ENCODE measurements at regions of chr5 and their contacts with region 1.

Region 1: DNA sequence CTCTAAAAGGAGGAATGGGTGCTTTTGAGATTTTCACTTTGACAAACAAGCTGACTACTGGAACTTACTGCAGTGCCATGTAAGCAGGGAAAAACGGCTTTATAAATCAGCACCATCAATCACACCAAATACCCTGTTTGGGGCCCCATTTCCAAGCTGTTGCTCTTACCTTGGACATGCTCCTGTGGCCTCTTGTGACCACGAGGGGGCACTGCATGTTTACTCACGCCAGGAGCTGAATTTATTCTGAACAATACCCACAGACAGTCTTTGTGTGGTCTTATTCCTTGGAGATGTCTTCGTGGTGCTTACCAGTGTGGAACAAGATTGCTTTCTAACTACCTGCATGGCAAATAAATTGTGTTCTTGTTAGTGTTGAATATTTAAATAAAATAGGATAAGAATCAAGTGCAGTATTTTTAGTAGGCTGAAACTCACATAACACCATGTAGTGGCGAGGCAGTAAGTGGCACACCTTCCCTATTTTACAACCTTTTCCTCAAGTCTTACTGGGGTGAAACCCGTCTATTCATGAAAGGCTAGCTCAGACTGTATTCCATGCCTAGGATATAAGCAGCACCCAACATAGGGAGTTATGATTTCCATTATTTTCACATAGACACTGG is 155.5 kb upstream of the NMUR2 start:
- DNase-seq: peak; percentile 36
- H3K4me3 ChIP-seq: no peak overlapping the region
- H3K27ac ChIP-seq: no peak overlapping the region
- H3K4me1 ChIP-seq: no peaks in the 10 kb centered on the region
- H3K27me3 ChIP-seq: no peaks in the 10 kb centered on the region
- CTCF ChIP-seq: peak; percentile 79
- EP300 ChIP-seq: no peak
- RAD21 ChIP-seq: peak; percentile 72

Region 2: DNA sequence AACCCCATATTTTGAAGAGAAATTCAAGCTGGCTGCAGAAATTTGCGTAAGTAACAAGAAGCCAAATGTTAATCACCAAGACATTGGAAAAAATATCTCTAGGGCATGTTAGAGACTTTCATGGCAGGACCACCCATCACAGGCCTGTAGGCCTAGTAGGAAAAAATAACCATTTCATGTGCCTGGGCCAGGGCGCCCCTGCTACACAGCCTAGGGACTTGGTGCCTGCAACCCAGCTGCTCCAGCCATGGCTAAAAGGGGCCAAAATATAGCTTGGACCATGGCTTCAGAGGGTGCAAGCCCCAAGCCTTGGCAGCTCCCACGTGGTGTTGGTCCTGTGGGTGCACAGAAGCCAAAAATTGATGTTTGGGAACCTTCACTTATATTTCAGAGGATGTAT is 12.2 kb after region 1 on chr5:
- CTCF ChIA-PET with region 1: interaction called, 17 read pairs
- POLR2A ChIA-PET with region 1: no interaction called
- DNase-seq: no peak
- H3K4me3 ChIP-seq: no peak overlapping the region
- H3K27ac ChIP-seq: no peak overlapping the region
- H3K4me1 ChIP-seq: no peaks in the 10 kb centered on the region
- H3K27me3 ChIP-seq: no peaks in the 10 kb centered on the region
- CTCF ChIP-seq: no peak
- EP300 ChIP-seq: no peak
- RAD21 ChIP-seq: no peak

Region 3: DNA sequence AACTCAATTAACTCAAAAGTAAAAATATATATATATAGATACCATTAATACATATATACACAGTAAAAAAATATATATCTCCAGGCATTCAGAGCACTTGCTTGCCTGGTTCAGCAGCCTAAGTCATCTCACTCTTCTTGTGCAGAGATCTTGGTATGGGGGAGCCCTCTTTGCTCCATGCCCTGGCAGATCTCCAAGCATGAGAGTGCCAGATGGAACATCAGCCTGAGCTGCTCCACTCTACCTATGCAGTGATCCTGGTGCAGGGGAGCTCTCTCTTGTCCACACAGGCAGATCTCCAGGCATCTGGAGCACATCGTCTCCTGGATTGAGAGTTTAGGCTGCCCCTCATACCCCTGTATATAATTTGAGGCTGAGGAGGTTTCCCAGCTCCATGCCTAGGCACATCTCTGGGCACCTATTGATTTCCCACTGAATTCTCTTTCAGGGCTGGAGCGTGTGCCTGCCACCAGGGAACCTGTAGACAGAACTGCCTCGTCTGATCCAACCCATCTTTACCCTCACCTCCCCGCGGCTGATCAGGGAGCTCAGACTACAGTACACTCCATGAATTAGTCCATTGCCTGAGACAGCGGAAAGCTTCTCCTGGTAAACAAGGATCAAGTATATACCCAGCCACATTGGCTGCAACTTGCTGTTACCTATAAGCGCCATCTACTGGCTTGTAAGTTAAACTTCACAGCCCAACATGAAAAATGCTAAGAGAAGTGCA is 587.4 kb after region 1 on chr5:
- CTCF ChIA-PET with region 1: interaction called, 13 read pairs
- POLR2A ChIA-PET with region 1: no interaction called
- DNase-seq: peak; percentile 9
- H3K4me3 ChIP-seq: no peak overlapping the region
- H3K27ac ChIP-seq: no peak overlapping the region
- H3K4me1 ChIP-seq: no peaks in the 10 kb centered on the region
- H3K27me3 ChIP-seq: no peaks in the 10 kb centered on the region
- CTCF ChIP-seq: peak; percentile 74
- EP300 ChIP-seq: no peak
- RAD21 ChIP-seq: peak; percentile 73

Measured in SK-N-SH (cell line).